PC-3 (cell line): ENCODE measurements at regions of chr14 and their contacts with region 1.

Region 1: DNA sequence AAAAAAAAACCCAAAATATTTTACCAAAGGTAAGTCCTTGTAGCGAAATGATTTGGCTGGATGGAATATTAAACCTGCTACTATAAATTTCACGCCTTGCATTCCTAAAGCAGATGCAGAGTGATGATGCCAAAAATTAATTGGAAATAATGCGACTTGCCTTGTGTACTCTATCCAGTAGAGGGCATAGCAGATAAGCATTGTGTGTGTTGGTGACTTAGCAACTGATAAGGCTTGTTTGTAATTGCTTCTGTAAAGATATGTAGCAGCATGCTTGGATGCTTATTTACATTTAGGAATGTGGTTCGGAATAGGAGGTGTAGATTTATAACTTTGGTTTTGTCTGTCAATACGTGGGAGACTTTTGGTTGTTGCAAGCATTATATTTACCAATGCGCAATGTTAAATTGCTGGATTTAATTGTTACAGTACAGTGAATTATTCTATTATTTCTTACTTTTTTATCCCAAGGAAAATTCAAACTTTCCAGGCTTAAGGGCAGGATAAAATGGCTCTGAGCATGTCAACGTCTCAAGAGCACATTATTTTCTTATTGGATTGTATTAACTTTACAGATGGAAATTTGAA is 80.5 kb downstream of the TMEM260 start:
- DNase-seq: peak; percentile 82
- ATAC-seq: peak; percentile 83
- H3K4me3 ChIP-seq: no peak overlapping the region
- H3K27ac ChIP-seq: no peak overlapping the region
- H3K4me1 ChIP-seq: no peaks in the 10 kb centered on the region
- H3K27me3 ChIP-seq: peaks cover 41% of the 10 kb centered on the region
- CTCF ChIP-seq: peak; percentile 98

Region 2: DNA sequence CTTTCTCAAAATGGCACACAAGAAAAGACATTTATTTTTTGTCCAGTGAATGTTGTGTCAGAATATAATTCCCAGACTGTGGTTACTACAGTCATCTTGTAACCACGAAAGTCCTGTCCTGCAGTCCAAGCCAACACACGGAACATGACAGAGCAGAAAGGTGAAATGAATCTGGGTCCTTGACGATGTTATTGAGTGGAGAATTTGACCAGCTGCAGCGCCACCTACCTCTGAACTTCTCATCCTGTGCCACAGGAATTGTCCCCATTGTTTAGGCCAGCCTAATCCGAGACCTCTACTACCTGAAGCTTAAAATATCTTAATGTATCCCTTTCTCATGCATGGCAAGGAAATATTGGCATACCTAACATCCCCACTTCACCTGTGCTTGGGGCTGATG is 214.3 kb after region 1 on chr14:
- CTCF ChIA-PET with region 1: no interaction called
- POLR2A ChIA-PET with region 1: no interaction called
- intact Hi-C with region 1: loop called (anchors 1 kb)
- DNase-seq: peak; percentile 70
- ATAC-seq: peak; percentile 86
- H3K4me3 ChIP-seq: no peak overlapping the region
- H3K27ac ChIP-seq: no peak overlapping the region
- H3K4me1 ChIP-seq: no peaks in the 10 kb centered on the region
- H3K27me3 ChIP-seq: peaks cover 44% of the 10 kb centered on the region
- CTCF ChIP-seq: peak; percentile 93

Region 3: DNA sequence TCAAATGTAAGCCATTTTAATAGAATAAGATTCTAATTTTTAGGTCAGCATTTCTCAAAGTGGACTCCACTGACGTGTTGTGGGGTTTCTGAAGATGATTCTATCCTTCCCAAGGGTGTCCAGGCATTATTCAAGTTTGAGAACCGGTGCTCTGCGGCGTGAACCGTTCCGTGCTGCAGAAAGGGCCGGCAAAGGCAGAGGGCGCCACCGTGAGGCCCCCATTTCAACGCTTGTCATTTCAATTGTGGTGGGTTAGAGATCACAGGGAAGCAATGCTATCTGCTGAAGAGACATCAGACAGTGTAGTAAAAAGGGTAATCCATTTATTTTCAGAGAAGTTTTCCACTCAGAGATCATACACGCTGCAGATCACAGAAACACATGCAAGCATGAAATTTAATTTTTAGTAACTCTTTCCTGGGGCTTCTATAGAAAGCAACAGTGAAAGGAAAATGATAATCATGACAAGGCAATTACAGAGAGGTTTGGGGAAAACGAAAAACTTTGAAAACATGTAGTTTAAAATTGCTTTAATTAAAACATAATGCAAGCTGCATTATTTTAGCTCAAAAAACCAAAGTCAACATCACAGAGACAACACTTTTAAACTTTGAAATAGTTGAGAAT is 406.9 kb after region 1 on chr14:
- CTCF ChIA-PET with region 1: no interaction called
- POLR2A ChIA-PET with region 1: no interaction called
- intact Hi-C with region 1: loop called (anchors 1 kb)
- DNase-seq: peak; percentile 79
- ATAC-seq: peak; percentile 94
- H3K4me3 ChIP-seq: no peak overlapping the region
- H3K27ac ChIP-seq: no peak overlapping the region
- H3K4me1 ChIP-seq: no peaks in the 10 kb centered on the region
- H3K27me3 ChIP-seq: peaks cover 88% of the 10 kb centered on the region
- CTCF ChIP-seq: peak; percentile 99

Region 4: GRCh38 chr14:57317316-57317715 is 657.3 kb after region 1 on chr14:
- CTCF ChIA-PET with region 1: interaction called, 3 read pairs
- POLR2A ChIA-PET with region 1: no interaction called
- intact Hi-C with region 1: loop called (anchors 1 kb)
- DNase-seq: peak; percentile 99
- ATAC-seq: peak; percentile 89
- H3K4me3 ChIP-seq: no peak overlapping the region
- H3K27ac ChIP-seq: no peak overlapping the region
- H3K4me1 ChIP-seq: no peaks in the 10 kb centered on the region
- H3K27me3 ChIP-seq: peaks cover 44% of the 10 kb centered on the region
- CTCF ChIP-seq: peak; percentile 100